ENCODE measurements at regions of chr3 and their contacts with region 1.

Region 1: DNA sequence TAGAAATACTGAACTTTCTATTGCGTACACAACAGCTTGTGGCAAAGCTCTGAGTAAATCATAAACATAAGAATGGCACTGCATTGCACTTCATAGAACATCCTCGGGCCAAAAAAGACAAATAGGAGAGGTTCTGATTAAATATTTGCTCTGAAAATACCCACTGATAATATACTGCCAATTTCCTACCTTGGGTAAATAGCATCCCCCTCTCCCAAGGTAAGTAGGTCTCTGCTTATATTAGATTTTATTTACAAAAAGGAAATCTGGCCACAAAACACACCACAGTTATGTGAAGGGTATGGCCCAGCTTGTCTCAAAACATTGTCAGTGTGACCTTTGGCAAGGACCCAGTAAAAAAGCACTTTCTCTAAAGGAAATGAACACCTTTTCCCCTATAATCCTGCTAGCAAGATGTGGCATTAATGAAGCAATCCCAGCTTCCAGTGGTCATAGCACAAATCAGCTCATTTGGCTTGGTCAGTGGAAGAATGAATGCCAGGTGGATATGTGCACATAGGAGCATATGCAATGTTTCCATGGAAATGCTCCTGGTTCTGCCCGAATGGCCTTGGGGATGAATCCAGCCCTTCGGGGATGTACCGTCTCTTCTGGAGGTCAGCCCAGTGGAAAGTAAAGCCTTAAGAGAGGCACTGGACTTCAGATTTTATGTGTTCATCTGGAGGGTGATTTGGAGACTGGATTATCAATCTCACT is 315.9 kb downstream of the LSAMP start:
- DNase-seq: peak; percentile 48
- ATAC-seq: peak; percentile 88
- H3K4me3 ChIP-seq: no peak overlapping the region
- H3K27ac ChIP-seq: no peak overlapping the region
- H3K4me1 ChIP-seq: no peaks in the 10 kb centered on the region
- H3K27me3 ChIP-seq: no peaks in the 10 kb centered on the region
- CTCF ChIP-seq: no peak

Region 2: GRCh38 chr3:116000311-116000710 is 129.1 kb before region 1 on chr3:
- CTCF ChIA-PET with region 1: no interaction called
- POLR2A ChIA-PET with region 1: no interaction called
- intact Hi-C with region 1: loop called (anchors 2 kb)
- DNase-seq: peak; percentile 93
- ATAC-seq: peak; percentile 77
- H3K4me3 ChIP-seq: peak overlapping the region; percentile 20; the same call in 1 of the 2 replicates
- H3K27ac ChIP-seq: peak overlapping the region; percentile 89
- H3K4me1 ChIP-seq: peaks cover 38% of the 10 kb centered on the region
- H3K27me3 ChIP-seq: no peaks in the 10 kb centered on the region
- CTCF ChIP-seq: no peak

Region 3: GRCh38 chr3:116048991-116049390 is 80.4 kb before region 1 on chr3:
- CTCF ChIA-PET with region 1: no interaction called
- POLR2A ChIA-PET with region 1: no interaction called
- intact Hi-C with region 1: no loop called
- DNase-seq: no peak
- ATAC-seq: no peak
- H3K4me3 ChIP-seq: no peak overlapping the region
- H3K27ac ChIP-seq: no peak overlapping the region
- H3K4me1 ChIP-seq: no peaks in the 10 kb centered on the region
- H3K27me3 ChIP-seq: no peaks in the 10 kb centered on the region
- CTCF ChIP-seq: no peak

Region 4: GRCh38 chr3:116059421-116060096 is 69.8 kb before region 1 on chr3:
- CTCF ChIA-PET with region 1: no interaction called
- POLR2A ChIA-PET with region 1: no interaction called
- intact Hi-C with region 1: loop called (anchors 1 kb)
- DNase-seq: peak; percentile 88
- ATAC-seq: peak; percentile 100
- H3K4me3 ChIP-seq: no peak overlapping the region
- H3K27ac ChIP-seq: peak overlapping the region; percentile 61
- H3K4me1 ChIP-seq: peaks cover 11% of the 10 kb centered on the region; the same call in 1 of the 2 replicates
- H3K27me3 ChIP-seq: no peaks in the 10 kb centered on the region
- CTCF ChIP-seq: no peak

Measured in PC-3 (cell line).